ENCODE measurements at regions of chr21 and their contacts with region 1.

Region 1: DNA sequence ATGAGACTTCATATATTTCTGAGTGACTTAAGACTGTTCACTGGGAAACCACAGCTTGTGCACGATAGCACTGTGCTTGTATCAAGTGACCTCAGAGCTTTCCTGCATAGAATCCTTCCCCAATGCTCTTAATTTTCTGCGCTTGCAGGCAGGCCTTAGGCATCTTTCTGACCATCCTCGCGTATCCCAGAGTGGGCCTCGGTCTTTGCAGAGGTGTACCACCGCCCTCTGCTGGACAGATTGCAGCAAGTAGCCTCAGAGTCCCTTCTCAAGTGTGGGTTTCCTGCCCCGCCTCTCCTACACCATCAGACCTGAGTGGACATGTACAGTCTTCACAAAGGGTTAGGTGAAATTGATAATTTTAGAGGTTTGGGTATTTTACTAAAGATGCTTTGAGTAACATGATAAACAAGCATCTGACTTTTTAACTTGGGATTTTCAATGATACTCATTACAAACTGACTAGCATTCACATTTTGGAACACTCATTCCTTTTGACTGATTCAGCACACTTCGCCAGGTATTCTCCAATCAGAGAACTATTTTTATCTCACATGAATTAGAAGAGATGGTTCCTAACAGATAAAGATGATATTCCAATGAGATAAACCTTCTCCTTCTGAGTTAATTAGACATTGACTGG is 246.5 kb upstream of the USP25 start:
- DNase-seq: peak; percentile 96
- H3K4me3 ChIP-seq: no peak overlapping the region
- H3K27ac ChIP-seq: no peak overlapping the region
- H3K4me1 ChIP-seq: no peaks in the 10 kb centered on the region
- H3K27me3 ChIP-seq: no peaks in the 10 kb centered on the region
- CTCF ChIP-seq: peak; percentile 84 to 96 (median 89)
- EP300 ChIP-seq: no peak
- POLR2A ChIP-seq: no peak

Region 2: DNA sequence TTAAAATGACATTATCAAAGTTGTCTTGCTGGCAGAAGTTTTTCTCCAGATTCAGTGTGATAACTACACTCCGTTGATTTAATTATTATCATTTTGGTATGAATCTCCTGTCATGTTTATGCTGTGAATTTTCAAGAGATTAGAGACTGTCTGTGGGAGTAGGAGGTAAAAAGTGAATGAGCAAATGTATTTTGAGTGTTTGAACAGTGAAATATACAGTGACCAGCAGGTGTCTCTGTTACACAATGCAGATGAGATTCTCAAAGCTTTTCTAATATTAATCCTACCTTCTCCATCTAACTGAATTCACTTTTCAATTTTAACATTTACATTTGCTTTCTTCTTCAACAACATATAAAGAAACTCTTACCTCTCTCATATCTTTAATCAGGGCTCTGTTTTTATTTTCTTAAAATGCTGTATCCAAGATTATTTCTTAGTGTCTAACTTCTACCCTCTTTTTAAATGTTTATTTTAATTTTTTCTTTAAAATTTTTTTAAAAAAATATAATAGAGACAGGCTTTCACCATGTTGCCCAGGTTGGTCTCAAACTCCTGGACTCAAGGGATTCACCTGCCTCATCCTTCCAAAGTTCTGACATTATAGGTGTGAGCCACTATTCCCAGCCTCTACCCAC is 1079.5 kb before region 1 on chr21:
- intact Hi-C with region 1: loop called (anchors 10 kb)
- DNase-seq: no peak
- H3K4me3 ChIP-seq: no peak overlapping the region
- H3K27ac ChIP-seq: no peak overlapping the region
- H3K4me1 ChIP-seq: no peaks in the 10 kb centered on the region
- H3K27me3 ChIP-seq: no peaks in the 10 kb centered on the region
- CTCF ChIP-seq: peak; percentile 32 to 49 (median 42)
- EP300 ChIP-seq: no peak
- POLR2A ChIP-seq: no peak

Region 3: DNA sequence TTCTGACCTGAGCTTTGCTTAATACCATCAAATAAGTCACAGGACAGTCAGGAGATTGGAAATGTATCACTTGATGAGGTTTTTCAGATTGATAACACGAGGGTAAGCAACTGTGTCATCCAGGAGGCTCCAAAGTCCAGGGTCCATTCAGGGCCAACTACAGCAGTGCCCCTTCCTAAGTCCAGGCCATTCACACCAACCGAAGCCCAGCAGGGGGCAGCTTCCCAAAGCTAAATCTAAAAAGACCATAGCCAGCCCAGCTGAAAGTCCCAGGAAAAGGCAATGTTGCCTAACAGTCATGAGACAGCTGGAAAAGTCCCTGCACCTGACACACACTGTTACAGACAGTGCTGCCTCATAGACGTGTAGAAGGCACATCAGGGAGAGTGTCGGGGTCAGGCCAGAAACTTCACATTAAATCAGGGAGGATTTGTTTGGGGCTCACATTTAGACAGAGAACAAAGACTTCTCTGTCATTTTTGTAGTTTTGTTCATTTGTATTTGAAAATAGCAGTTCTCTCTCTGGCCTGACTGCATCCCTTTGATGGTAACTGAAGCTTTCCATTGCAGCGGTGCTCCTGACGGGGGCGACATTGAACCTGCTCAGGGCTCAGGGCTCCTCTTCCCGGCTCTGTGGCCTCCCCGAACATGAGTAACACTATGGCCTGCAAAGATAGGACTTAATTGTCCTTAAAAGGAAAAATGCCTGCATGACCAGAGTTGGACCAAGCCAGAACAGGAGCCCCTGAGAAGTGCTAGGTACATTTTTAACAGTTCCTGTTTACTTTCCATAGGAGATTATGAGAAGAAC is 618.8 kb before region 1 on chr21:
- intact Hi-C with region 1: loop called (anchors 1 kb)
- DNase-seq: no peak
- H3K4me3 ChIP-seq: no peak overlapping the region
- H3K27ac ChIP-seq: peak overlapping the region; percentile 3 to 46 (median 25)
- H3K4me1 ChIP-seq: peaks cover 8 to 44% (median 35%) of the 10 kb centered on the region in 4 donors
- H3K27me3 ChIP-seq: no peaks in the 10 kb centered on the region
- CTCF ChIP-seq: peak; percentile 50 to 60 (median 56)
- EP300 ChIP-seq: no peak
- POLR2A ChIP-seq: no peak

Region 4: DNA sequence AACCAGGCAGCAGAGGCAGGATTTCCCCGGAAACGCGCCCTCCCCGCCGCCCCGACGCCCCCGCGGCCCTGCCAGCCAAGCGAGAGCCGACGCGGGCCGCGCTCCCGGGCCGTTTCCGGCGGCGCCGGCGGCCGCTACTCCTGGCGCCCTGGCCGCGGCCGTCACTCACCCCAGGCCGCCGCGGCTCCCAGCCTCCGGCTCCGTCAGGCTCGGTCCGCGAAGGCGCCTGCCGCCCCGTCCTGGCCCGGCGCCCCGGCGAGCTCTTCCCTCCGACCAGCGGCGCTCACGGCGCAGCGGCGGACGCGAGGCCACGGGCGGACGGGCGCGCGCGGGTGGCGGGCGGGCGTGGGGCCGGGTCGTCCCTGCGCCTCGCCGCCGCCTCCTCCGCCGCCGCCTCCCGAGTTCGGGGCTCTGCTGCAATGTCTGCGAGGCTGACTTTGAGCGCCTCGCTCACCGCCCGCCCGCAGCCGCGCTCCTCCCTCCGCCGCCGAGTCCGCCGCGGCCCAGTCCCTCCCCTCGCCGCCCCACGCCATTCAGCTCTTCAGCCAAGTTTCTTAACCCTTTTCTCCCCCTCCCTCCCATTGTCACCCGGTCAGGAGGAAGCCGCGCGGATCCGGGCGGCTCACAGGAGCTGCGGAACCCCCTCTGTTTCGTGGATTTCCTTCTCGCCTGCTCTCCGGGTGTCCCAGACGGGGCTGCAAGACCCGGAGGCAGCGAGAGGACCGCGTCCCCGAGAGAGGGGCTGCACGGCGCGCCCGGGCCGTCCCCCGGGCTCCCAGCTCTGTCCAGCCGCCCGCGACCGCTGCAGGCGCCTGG is 418.5 kb before region 1 on chr21 and contains the start of gene NRIP1:
- intact Hi-C with region 1: loop called (anchors 5 kb)
- DNase-seq: peak; percentile 96
- H3K4me3 ChIP-seq: peak within 1 kb of the TSS; percentile 67 to 96 (median 92)
- H3K27ac ChIP-seq: peak within 1 kb of the TSS; percentile 97 to 98 (median 98)
- H3K4me1 ChIP-seq: peaks cover 29 to 46% (median 37%) of the 10 kb centered on the region in 4 donors
- H3K27me3 ChIP-seq: no peaks in the 10 kb centered on the region
- CTCF ChIP-seq: no peak
- EP300 ChIP-seq: no peak
- POLR2A ChIP-seq: no peak
- total RNA-seq, gene NRIP1: 21.7 to 33.3 (median 28.5) TPM

Region 5: GRCh38 chr21:15400905-15401304 is 82.4 kb before region 1 on chr21:
- intact Hi-C with region 1: no loop called
- DNase-seq: no peak
- H3K4me3 ChIP-seq: no peak overlapping the region
- H3K27ac ChIP-seq: no peak overlapping the region
- H3K4me1 ChIP-seq: no peaks in the 10 kb centered on the region
- H3K27me3 ChIP-seq: no peaks in the 10 kb centered on the region
- CTCF ChIP-seq: no peak
- EP300 ChIP-seq: no peak
- POLR2A ChIP-seq: no peak

Measured in esophagus muscularis mucosa (tissue), 4 donors.